ENCODE measurements at regions of chr7 and their contacts with region 1.

Region 1: GRCh38 chr7:91880413-91881241 is at the start of gene MTERF1:
- DNase-seq: peak; percentile 76 to 94
- H3K4me3 ChIP-seq: peak within 1 kb of the TSS; percentile 95
- H3K27ac ChIP-seq: 0 out of 2 replicates have a peak within 1 kb of the TSS, but pooled peaks have one; percentile 35
- H3K4me1 ChIP-seq: peaks cover 12% of the 10 kb centered on the region; the same call in 1 of the 2 replicates
- H3K27me3 ChIP-seq: no peaks in the 10 kb centered on the region
- CTCF ChIP-seq: peak; percentile 94
- total RNA-seq, gene MTERF1: 16.9 and 17.5 TPM in 2 replicates

Region 2: DNA sequence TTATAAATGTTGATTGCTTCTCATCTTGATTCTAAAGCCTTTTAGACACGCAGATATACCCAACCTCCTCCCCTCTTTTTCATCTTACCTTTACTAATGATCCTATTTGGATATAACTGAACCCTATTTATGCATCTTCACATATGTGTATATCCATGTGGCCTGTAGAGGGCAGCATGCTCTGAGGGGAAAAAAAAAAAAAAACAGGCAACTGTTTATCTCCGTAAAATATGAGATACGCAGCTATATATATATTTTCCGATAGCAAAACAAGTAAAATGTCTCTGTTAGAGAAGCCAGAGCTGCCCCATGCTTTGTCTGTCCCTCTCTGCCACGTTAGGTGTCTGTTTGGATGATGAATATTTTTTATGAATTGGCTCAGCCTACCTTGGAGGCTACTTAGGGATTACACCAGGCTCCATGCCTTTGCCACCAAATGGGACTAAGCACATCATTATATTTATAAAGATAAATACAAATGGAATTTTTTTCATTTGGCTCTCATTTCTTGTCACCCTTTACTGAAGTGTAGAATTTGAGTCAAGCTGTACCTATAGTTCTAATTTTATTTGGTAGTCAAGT is 791.2 kb before region 1 on chr7:
- CTCF ChIA-PET with region 1: no interaction called
- POLR2A ChIA-PET with region 1: no interaction called
- intact Hi-C with region 1: loop called (anchors 1 kb)
- DNase-seq: peak in 1 of 2 experiments; percentile 19
- H3K4me3 ChIP-seq: no peak overlapping the region
- H3K27ac ChIP-seq: no peak overlapping the region
- H3K4me1 ChIP-seq: no peaks in the 10 kb centered on the region
- H3K27me3 ChIP-seq: no peaks in the 10 kb centered on the region
- CTCF ChIP-seq: peak; percentile 84

Region 3: GRCh38 chr7:91835846-91836368 is 44.7 kb before region 1 on chr7:
- CTCF ChIA-PET with region 1: interaction called, 16 read pairs
- POLR2A ChIA-PET with region 1: no interaction called
- intact Hi-C with region 1: no loop called
- DNase-seq: no peak
- H3K4me3 ChIP-seq: no peak overlapping the region
- H3K27ac ChIP-seq: no peak overlapping the region
- H3K4me1 ChIP-seq: no peaks in the 10 kb centered on the region; the same call in 1 of the 2 replicates
- H3K27me3 ChIP-seq: no peaks in the 10 kb centered on the region
- CTCF ChIP-seq: no peak

Region 4: DNA sequence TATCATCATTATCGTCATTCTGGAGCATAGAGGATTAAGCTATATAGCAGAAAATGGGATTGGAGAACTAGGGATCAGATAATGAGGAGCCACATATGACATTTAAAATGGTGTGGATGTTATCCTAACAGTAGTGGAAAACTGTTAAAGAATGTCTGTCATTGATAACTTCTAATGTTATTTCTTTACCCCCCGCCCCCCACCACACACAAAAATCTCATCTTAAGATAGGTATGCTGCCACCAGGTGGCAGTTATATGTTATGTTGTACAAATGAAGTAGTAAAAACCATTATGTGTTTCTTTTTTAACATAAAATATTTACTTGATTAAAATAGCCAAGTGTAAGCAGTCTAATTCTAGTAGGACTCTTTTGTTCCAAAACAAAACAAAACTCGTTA is 73.0 kb after region 1 on chr7:
- CTCF ChIA-PET with region 1: interaction called, 3 read pairs
- POLR2A ChIA-PET with region 1: no interaction called
- intact Hi-C with region 1: loop called (anchors 1 kb)
- DNase-seq: no peak
- H3K4me3 ChIP-seq: no peak overlapping the region
- H3K27ac ChIP-seq: no peak overlapping the region
- H3K4me1 ChIP-seq: no peaks in the 10 kb centered on the region
- H3K27me3 ChIP-seq: no peaks in the 10 kb centered on the region
- CTCF ChIP-seq: peak; percentile 65

Region 5: DNA sequence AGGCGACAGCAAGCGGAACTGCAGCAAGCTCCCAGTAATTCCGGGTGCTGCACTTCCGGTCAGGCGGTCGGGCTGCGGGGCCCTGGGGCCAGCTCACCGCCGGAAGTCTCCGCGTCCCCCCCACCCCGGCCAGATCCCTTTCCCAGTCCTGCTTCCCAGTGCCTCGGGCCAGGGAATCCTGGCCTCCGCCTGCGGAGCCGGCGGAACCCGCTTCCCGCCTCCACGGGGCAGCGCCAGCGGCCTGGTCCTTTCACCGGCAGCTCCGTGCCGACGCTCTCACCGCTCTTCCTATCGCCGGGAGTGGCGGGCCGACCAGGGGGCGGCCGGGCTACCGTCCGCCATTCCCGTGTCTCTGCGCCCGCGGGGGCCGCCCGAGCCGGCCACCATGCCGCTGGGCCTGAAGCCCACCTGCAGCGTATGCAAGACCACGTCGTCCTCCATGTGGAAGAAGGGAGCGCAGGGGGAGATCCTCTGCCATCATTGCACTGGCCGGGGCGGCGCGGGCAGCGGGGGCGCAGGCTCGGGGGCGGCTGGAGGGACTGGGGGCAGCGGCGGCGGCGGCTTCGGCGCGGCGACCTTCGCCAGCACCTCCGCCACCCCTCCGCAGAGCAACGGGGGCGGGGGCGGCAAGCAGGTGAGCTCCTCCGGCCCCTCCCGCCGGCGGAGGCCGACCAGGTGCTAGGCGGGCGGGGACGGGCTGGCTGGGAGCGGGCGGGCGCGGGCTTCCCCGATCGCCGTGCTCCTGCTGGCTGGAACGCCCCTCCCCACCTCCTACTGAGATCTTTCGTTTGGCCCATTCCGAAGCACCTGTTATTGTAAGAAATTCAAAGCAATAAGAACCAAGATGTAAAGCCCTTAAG is 566.9 kb after region 1 on chr7 and contains the start of gene GATAD1:
- CTCF ChIA-PET with region 1: no interaction called
- POLR2A ChIA-PET with region 1: no interaction called
- intact Hi-C with region 1: loop called (anchors 1 kb)
- DNase-seq: peak; percentile 81 to 92
- H3K4me3 ChIP-seq: peak within 1 kb of the TSS; percentile 60
- H3K27ac ChIP-seq: peak within 1 kb of the TSS; percentile 55
- H3K4me1 ChIP-seq: peaks cover 9% of the 10 kb centered on the region
- H3K27me3 ChIP-seq: no peaks in the 10 kb centered on the region
- CTCF ChIP-seq: peak; percentile 86; the same call in 1 of the 2 replicates
- total RNA-seq, gene GATAD1: 39.4 and 41.7 TPM in 2 replicates

Region 6: GRCh38 chr7:92817398-92817797 is 936.8 kb after region 1 on chr7:
- CTCF ChIA-PET with region 1: no interaction called
- POLR2A ChIA-PET with region 1: interaction called, 11 read pairs
- intact Hi-C with region 1: no loop called
- DNase-seq: no peak
- H3K4me3 ChIP-seq: no peak overlapping the region
- H3K27ac ChIP-seq: no peak overlapping the region
- H3K4me1 ChIP-seq: no peaks in the 10 kb centered on the region
- H3K27me3 ChIP-seq: no peaks in the 10 kb centered on the region
- CTCF ChIP-seq: no peak

Measured in PC-9 (cell line).